ENCODE measurements at regions of chr14 and their contacts with region 1.

Region 1: DNA sequence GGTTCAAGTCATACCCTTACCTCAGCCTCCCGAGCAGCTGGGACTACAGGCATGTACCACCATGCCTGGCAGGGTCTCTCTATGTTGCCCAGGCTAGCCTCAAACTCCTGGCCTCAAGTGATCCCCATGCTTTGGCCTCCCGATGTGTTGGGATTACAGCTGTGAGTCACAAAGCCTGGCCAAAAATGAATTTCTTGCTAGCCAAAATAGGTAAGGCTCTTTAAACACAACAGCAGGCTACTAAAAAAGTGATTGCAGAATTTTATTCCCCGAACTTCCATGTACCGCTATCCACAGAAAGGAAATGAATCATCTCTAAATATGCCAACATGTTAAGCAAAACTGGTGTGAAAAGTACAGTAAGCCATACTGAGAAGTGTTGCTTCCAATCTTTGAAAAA is 50.6 kb downstream of the WDHD1 start:
- DNase-seq: peak; percentile 70
- H3K4me3 ChIP-seq: no peak overlapping the region
- H3K27ac ChIP-seq: peak overlapping the region; percentile 62
- H3K4me1 ChIP-seq: peaks cover 13% of the 10 kb centered on the region
- H3K27me3 ChIP-seq: no peaks in the 10 kb centered on the region
- CTCF ChIP-seq: no peak
- POLR2A ChIP-seq: no peak

Region 2: DNA sequence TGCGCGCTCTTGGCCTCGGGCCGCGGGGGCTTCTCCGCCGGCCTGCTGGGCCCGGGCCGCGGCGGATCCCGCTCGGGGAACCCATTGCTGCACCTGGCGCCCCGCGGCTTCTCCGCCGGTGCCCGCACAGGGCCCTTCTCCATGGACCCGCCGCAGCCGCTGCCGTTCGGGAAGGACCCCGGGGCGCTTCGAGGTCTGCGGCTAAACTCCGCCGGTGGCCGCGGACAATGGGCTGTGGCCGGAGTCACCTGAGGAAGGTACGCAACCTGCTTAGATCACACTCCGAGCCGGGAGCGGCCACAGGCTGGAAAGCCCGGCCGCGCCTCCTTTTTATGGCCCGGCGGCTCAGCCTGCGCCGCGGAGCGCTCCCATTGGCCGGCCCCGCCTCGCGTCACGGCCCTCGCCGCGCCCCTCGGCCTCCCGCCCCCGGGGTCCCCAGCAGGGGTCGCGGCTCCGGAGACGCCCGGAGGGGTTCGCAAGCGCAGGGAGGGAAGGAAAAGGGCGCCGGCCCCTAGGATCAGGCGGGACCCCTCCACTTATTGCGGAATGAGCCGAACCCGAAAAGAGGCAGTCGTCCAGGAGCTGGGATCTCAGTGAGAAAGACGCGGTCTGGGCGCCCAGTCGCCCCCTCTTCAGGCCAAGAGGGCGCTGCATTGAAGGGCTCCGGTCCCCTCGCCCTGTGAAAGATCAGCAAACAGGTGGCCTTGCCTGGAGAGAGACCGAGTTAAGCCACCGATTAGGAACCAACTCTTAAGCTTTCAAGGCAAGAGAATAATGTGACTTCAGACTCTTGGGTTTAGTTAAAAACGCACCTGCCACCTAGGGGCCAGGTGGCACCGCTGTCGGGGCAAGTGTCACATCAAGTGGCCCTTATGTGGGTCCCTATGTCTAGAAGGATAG is 73.5 kb before region 1 on chr14 and contains the start of gene GCH1:
- CTCF ChIA-PET with region 1: interaction called, 4 read pairs
- POLR2A ChIA-PET with region 1: no interaction called
- dilution Hi-C with region 1: no loop called
- intact Hi-C with region 1: loop called (anchors 5 kb)
- DNase-seq: peak; percentile 70
- H3K4me3 ChIP-seq: peak within 1 kb of the TSS; percentile 71 to 97 (median 86)
- H3K27ac ChIP-seq: peak within 1 kb of the TSS; percentile 16
- H3K4me1 ChIP-seq: peaks cover 5% of the 10 kb centered on the region
- H3K27me3 ChIP-seq: no peaks in the 10 kb centered on the region
- CTCF ChIP-seq: peak; percentile 35 to 54
- POLR2A ChIP-seq: peak; percentile 46
- total RNA-seq, gene GCH1: 4.6 and 5.0 TPM in 2 replicates

Region 3: GRCh38 chr14:55136885-55137786 is 160.8 kb after region 1 on chr14:
- CTCF ChIA-PET with region 1: no interaction called
- POLR2A ChIA-PET with region 1: no interaction called
- dilution Hi-C with region 1: no loop called
- intact Hi-C with region 1: no loop called
- DNase-seq: peak; percentile 85
- H3K4me3 ChIP-seq: no peak overlapping the region
- H3K27ac ChIP-seq: peak overlapping the region; percentile 37
- H3K4me1 ChIP-seq: peaks cover 13% of the 10 kb centered on the region
- H3K27me3 ChIP-seq: no peaks in the 10 kb centered on the region
- CTCF ChIP-seq: no peak
- POLR2A ChIP-seq: no peak

Measured in endothelial cell of umbilical vein (primary cell).